Activated naive CD4-positive, alpha-beta T cell treated with anti-CD3 and anti-CD28 coated beads for 36 hours (primary cell): ENCODE measurements at regions of chr6 and their contacts with region 1.

Region 1: DNA sequence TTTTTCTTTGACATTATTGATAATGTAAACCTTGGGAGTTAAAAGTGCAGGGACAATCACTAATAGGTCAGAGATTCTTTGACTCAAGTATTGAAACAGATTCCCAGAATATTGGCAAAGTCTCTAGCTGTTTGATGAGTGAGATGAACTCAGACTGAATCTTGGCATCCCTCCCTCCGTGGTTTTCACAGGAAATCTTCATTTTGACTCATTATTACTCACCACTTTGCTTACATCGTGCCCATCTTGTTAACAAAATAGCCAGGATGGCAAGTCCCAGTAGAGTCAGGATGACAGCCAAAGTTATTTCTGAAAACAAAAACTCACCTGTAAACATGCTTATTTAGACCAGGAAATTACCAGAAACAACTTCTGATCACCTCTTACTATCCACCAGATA is 2.0 kb downstream of the TSBP1 start:
- DNase-seq: peak; percentile 65
- H3K4me3 Mint-ChIP-seq: no peak overlapping the region
- H3K27ac Mint-ChIP-seq: no peak overlapping the region
- H3K4me1 Mint-ChIP-seq: peaks cover 6% of the 10 kb centered on the region
- H3K27me3 Mint-ChIP-seq: peaks cover 31% of the 10 kb centered on the region

Region 2: DNA sequence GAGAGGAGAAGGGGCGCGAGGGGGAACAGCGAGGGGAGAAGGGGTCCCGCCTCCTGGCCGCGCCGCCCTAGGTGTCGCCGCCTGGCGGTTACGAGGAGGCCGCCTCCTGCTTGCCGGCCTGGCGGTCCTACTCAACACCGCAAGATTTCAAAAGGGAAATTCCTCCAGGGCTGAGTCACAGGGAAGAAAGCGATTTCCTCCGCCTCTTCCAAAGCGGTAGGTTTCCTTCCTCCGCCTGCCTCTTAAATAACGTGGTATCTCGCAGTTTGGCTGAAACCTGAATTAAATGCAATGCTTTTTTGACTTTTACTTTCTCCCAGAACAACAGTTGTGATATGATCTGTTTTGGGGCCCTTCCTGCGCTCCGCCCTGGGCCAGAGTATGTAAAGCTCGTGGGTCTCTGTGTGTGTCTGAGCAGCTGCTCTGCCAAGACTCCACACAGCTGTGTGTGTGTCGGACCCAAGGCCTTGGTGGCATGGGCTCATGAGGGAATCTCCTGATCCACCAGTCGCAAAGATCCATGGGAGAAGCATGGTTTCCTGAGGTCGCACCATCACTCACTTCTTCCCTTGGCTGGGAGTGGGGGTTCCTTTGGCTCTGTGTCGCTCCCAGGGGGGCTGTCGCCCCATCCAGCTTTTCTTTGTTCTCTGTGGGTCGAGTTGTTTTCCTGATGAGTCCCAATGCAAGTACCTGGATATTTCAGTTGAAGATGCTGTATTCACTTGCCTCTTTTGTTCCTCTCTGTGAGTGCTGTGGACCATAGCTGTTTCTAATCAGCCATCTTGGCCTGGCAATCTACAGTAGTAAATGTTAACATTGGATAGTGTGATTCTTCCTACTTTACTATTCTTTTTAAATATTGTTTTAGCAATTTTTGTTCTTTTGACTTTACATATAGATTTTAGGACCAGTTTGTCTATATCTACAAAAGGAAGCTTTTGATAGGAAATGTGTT is 114.2 kb before region 1 on chr6:
- CTCF ChIA-PET with region 1: no interaction called
- intact Hi-C with region 1: loop called (anchors 1 kb)
- DNase-seq: peak; percentile 83
- H3K4me3 Mint-ChIP-seq: peak overlapping the region; percentile 34
- H3K27ac Mint-ChIP-seq: peak overlapping the region; percentile 31
- H3K4me1 Mint-ChIP-seq: peaks cover 26% of the 10 kb centered on the region
- H3K27me3 Mint-ChIP-seq: no peaks in the 10 kb centered on the region

Region 3: DNA sequence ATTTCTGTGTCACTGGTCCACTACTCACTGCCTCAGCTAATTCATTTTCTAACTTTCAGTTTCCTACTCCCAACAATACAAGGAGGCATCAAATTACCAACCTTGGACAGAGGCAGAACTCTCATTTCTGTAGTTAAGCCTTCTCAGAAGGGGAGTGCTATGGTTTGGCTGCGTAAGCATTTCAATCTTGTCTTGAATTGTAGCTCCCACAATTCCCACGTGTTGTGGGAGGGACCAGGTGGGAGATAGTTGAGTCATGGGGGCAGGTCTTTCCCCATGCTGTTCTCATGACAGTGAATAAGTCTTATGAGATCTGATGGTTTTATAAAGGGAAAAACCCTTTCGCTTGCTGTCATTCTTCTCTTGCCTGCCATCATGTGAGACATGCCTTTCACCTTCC is 92.9 kb after region 1 on chr6:
- CTCF ChIA-PET with region 1: no interaction called
- intact Hi-C with region 1: loop called (anchors 5 kb)
- DNase-seq: peak; percentile 64
- H3K4me3 Mint-ChIP-seq: no peak overlapping the region
- H3K27ac Mint-ChIP-seq: no peak overlapping the region
- H3K4me1 Mint-ChIP-seq: peaks cover 15% of the 10 kb centered on the region
- H3K27me3 Mint-ChIP-seq: peaks cover 39% of the 10 kb centered on the region